K562 (cell line): ENCODE measurements at regions of chr6 and their contacts with region 1.

Region 1: GRCh38 chr6:149082286-149082707 is 235.2 kb upstream of the TAB2 start:
- DNase-seq: peak; percentile 61 to 87 (median 70)
- ATAC-seq: peak; percentile 98
- H3K4me3 ChIP-seq: no peak overlapping the region
- H3K27ac ChIP-seq: no peak overlapping the region
- H3K4me1 ChIP-seq: no peaks in the 10 kb centered on the region
- H3K27me3 ChIP-seq: peaks cover 6 to 23% of the 10 kb centered on the region in 2 experiments
- CTCF ChIP-seq: peak; percentile 77 to 93 (median 87)
- EP300 ChIP-seq: no peak
- POLR2A ChIP-seq: no peak
- RAD21 ChIP-seq: peak; percentile 98

Region 2: GRCh38 chr6:149094156-149094555 is 11.9 kb after region 1 on chr6:
- CTCF ChIA-PET with region 1: no interaction called
- POLR2A ChIA-PET with region 1: no interaction called
- in situ Hi-C with region 1: no loop called
- intact Hi-C with region 1: no loop called
- DNase-seq: no peak
- ATAC-seq: no peak
- H3K4me3 ChIP-seq: no peak overlapping the region
- H3K27ac ChIP-seq: no peak overlapping the region
- H3K4me1 ChIP-seq: no peaks in the 10 kb centered on the region; a peak in 1 of 5 replicates
- H3K27me3 ChIP-seq: no peaks in the 10 kb centered on the region
- CTCF ChIP-seq: no peak
- EP300 ChIP-seq: no peak
- POLR2A ChIP-seq: no peak
- RAD21 ChIP-seq: no peak

Region 3: DNA sequence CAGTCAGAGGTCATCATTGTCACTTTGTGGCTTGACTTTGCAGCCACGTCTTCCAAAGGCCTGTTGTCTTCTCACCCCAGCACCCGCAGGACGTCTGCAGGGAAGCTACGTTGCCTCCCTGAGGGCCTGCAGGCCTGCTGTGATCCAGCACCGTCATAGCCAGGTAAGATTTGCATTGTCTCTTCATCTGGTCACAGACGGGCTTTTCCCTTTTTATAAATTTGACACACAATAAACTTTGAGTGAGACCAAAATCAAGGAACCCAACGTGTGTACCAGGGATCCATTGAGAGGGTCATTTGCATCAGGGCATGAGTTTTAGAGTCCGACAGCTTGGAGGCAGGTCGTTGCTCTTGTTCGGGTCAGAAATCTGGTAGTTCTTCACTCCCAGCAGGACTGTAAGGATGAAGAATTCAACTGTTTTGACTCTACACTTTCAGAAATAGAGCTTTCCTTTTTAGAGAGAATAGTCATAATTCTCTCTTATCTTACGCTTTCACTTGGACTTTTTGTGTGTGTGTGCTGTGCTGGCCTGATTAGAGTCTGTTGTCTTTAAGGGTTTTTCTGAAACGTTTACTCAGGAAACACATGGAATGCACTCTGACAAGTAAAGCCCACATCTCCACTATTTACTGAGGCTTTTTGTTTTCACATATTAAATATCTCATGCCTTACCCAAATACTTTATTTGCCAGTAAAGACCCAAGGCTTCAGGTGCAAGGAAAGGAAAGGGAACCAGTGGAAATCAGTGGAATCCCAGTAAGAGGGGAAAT is 58.0 kb after region 1 on chr6:
- CTCF ChIA-PET with region 1: no interaction called
- POLR2A ChIA-PET with region 1: no interaction called
- in situ Hi-C with region 1: no loop called
- intact Hi-C with region 1: loop called (anchors 1 kb)
- DNase-seq: peak; percentile 32 to 86 (median 55)
- ATAC-seq: peak; percentile 91
- H3K4me3 ChIP-seq: 0 out of 2 replicates have a peak overlapping the region, but pooled peaks have one; percentile 1
- H3K27ac ChIP-seq: peak overlapping the region; percentile 78
- H3K4me1 ChIP-seq: peaks cover 11 to 28% of the 10 kb centered on the region in 2 experiments
- H3K27me3 ChIP-seq: no peaks in the 10 kb centered on the region
- CTCF ChIP-seq: no peak
- EP300 ChIP-seq: peak; percentile 95
- POLR2A ChIP-seq: no peak
- RAD21 ChIP-seq: no peak; a peak in 1 of 4 replicates

Region 4: GRCh38 chr6:149190224-149190831 is 108.0 kb after region 1 on chr6:
- CTCF ChIA-PET with region 1: no interaction called
- POLR2A ChIA-PET with region 1: no interaction called
- in situ Hi-C with region 1: no loop called
- intact Hi-C with region 1: loop called (anchors 5 kb)
- DNase-seq: peak in 1 of 4 experiments; percentile 49
- ATAC-seq: peak; percentile 61; the same call in 2 of the 3 replicates
- H3K4me3 ChIP-seq: no peak overlapping the region
- H3K27ac ChIP-seq: no peak overlapping the region
- H3K4me1 ChIP-seq: no peaks in the 10 kb centered on the region
- H3K27me3 ChIP-seq: peaks cover 0 to 4% of the 10 kb centered on the region in 2 experiments; a peak in 3 of 5 replicates
- CTCF ChIP-seq: peak; percentile 49 to 56 (median 53); a peak in 5 of 6 replicates
- EP300 ChIP-seq: no peak
- POLR2A ChIP-seq: no peak
- RAD21 ChIP-seq: peak in 1 of 2 experiments; percentile 63; a peak in 2 of 4 replicates

Region 5: GRCh38 chr6:149316798-149317655 is 234.7 kb after region 1 on chr6:
- CTCF ChIA-PET with region 1: no interaction called
- POLR2A ChIA-PET with region 1: no interaction called
- in situ Hi-C with region 1: no loop called
- intact Hi-C with region 1: loop called (anchors 1 kb)
- DNase-seq: peak; percentile 89 to 97 (median 90)
- ATAC-seq: peak; percentile 92
- H3K4me3 ChIP-seq: peak overlapping the region; percentile 89
- H3K27ac ChIP-seq: peak overlapping the region; percentile 88
- H3K4me1 ChIP-seq: peaks cover 9 to 12% of the 10 kb centered on the region in 2 experiments
- H3K27me3 ChIP-seq: no peaks in the 10 kb centered on the region
- CTCF ChIP-seq: peak in 2 of 3 experiments; percentile 24 to 29; a peak in 3 of 6 replicates
- EP300 ChIP-seq: peak; percentile 5; the same call in 1 of the 2 replicates
- POLR2A ChIP-seq: peak; percentile 89
- RAD21 ChIP-seq: peak; percentile 31 to 44

Region 6: DNA sequence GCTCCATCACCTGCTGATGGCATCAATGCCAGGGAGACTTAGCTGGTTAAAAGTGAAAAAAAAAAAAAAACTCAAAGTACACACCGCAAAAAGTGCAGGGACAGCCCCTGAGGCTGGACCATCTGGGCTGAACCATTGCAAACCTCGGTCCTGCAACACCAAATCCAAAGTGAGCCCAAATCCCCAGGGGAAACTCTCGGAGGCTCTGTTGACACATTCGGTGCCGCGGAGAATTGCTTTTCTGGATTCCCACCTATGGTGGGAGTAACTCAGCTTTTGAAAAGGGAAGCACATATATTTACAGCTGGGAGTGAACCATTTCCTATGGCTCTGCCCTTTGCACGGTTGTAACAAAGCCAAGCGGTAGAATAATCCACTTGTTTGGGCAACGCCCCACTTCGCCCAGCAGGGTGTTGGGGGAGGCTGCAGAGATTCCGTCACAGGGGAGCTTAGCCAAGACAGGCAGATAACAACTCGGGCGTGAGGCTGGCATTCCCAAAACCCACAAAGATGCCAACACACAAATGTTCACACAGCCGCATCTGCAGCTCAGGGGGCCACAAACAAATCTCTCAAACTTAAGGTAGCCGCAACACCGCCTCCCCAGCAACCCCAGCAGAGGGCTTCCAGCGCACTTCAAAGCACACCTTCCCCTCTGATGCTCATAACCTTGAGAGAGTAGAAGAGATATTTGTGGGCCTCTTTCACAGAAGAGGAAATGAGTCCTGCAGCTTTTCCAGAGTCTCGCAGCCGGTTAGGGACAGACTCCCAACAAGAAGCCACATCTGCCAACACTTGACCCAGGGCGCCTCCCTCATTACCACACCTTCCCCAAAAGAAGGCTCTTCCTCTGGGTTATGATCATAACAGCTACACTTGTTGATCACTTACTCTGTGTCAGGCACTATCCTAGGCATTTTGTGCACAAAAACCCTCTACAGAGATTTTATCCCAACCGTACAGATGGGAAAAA is 391.1 kb after region 1 on chr6:
- CTCF ChIA-PET with region 1: no interaction called
- POLR2A ChIA-PET with region 1: no interaction called
- in situ Hi-C with region 1: no loop called
- intact Hi-C with region 1: no loop called
- DNase-seq: peak in 1 of 4 experiments; percentile 2
- ATAC-seq: 0 out of 3 replicates have a peak, but pooled peaks have one; percentile 36
- H3K4me3 ChIP-seq: no peak overlapping the region
- H3K27ac ChIP-seq: no peak overlapping the region
- H3K4me1 ChIP-seq: peaks cover 0 to 7% of the 10 kb centered on the region in 2 experiments; a peak in 1 of 5 replicates
- H3K27me3 ChIP-seq: peaks cover 63 to 84% of the 10 kb centered on the region in 2 experiments
- CTCF ChIP-seq: no peak
- EP300 ChIP-seq: no peak
- POLR2A ChIP-seq: no peak
- RAD21 ChIP-seq: no peak

Region 7: DNA sequence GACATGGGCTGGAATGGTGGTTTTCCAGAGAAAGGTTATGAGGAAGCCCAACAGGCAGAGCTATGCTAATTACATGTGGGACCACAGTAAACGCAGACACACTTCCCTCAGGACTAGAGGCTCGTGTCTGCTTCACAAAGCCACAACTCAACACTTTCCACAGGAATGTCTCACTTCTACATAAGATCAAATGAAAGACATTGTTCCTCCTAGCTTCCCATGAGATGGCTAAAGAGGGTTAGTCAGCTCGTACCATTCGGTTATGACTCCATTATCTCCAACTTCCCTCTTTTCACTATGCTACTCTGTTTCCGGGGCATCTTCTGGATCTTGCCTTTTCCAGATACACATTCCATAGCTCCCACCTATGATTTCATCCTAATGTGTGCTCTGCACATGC is 431.6 kb after region 1 on chr6:
- CTCF ChIA-PET with region 1: interaction called, 9 read pairs
- POLR2A ChIA-PET with region 1: no interaction called
- in situ Hi-C with region 1: no loop called
- intact Hi-C with region 1: loop called (anchors 2 kb)
- DNase-seq: no peak
- ATAC-seq: no peak
- H3K4me3 ChIP-seq: no peak overlapping the region
- H3K27ac ChIP-seq: no peak overlapping the region
- H3K4me1 ChIP-seq: no peaks in the 10 kb centered on the region
- H3K27me3 ChIP-seq: no peaks in the 10 kb centered on the region
- CTCF ChIP-seq: no peak
- EP300 ChIP-seq: no peak
- POLR2A ChIP-seq: no peak
- RAD21 ChIP-seq: no peak